ENCODE measurements at regions of chr4 and their contacts with region 1.

Region 1: DNA sequence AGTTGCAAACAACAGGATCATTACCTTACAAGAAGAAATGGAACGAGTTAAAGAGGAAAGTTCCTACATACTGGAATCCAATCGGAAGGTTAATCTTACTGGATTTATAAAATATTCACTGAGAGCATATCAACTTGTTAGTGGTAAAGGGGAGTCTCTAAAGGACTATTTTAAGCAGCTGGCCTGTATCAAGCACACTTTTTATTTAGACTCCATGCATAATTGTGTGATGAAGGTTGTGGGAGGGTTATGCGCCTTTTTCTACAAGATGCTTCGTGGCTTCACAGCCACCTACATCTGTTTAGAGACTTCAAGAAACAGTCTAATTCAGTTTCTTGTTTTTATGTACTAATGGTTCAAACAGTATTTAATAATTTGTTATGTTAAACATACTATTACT is 56.6 kb downstream of the GRSF1 start:
- DNase-seq: no peak
- ATAC-seq: no peak
- H3K4me3 ChIP-seq: no peak overlapping the region
- H3K27ac ChIP-seq: no peak overlapping the region
- H3K4me1 ChIP-seq: no peaks in the 10 kb centered on the region
- H3K27me3 ChIP-seq: no peaks in the 10 kb centered on the region

Region 2: GRCh38 chr4:69920874-69921273 is 862.2 kb before region 1 on chr4:
- intact Hi-C with region 1: no loop called
- DNase-seq: no peak
- ATAC-seq: no peak
- H3K4me3 ChIP-seq: no peak overlapping the region
- H3K27ac ChIP-seq: no peak overlapping the region
- H3K4me1 ChIP-seq: no peaks in the 10 kb centered on the region
- H3K27me3 ChIP-seq: peaks cover 0 to 4% of the 10 kb centered on the region in 2 donors

Region 3: DNA sequence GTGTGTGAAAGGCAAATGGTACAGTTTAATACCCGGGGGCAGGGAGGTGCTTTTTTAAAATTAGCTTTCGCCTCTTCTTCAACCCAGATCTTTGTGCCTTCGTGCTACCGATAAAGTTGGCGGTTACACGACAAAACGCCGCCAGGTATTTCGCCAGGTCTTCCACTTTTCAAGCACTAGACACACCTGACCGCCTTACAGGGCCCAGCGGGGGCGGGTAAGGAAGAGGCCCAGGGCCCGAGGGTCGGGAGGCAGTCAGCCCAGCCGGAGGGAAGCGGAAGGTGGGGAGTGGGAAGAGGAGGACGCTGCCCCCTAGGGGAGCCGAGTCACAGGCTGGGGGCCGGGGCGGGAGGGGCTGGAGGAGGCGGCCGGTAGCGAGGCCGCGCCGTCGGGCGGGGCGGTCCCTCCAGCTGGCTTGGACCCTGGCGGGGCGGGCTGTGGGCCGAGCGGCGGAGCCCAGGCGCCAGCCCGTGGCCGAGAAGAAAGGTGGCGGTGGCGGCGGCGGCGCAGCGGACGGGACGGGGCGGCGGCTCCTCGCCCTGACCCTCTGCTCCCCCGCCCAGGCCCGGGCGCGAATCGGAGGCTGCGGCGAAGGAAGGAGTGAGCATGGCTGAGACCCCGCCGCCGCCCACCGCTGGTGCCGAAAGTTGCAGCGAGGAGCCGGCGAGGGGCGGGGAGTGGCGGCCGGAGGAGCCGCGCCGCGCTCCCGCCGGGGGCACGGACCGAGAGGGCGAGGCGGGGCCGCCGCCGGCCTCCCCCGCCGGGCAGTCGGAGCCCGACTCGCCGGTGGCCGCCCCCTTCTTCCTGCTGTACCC is 78.6 kb before region 1 on chr4:
- intact Hi-C with region 1: loop called in 1 of 2 experiments (anchors 10 kb)
- DNase-seq: peak; percentile 86 to 93
- ATAC-seq: peak; percentile 92
- H3K4me3 ChIP-seq: peak overlapping the region; percentile 91 to 92
- H3K27ac ChIP-seq: peak overlapping the region; percentile 80 to 84
- H3K4me1 ChIP-seq: peaks cover 5 to 7% of the 10 kb centered on the region in 2 donors
- H3K27me3 ChIP-seq: no peaks in the 10 kb centered on the region

Region 4: DNA sequence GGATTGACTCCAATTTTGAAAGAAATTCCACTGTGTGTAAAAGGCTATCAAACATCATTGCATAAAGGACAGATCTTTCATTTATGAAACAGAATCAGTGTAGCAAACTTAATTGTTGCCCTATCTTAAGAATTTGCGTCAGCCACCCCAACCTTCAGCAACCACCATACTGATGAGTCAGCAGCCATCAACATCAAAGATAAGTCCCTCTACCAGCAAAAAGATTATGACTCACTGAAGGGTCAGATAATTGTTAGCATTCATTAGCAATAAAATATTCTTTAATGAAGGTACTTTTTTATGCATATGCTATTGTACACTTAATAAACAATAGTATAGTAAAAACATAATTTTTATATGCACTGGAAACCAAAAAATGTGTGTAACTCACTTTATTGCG is 72.4 kb after region 1 on chr4:
- intact Hi-C with region 1: no loop called
- DNase-seq: no peak
- ATAC-seq: no peak
- H3K4me3 ChIP-seq: no peak overlapping the region
- H3K27ac ChIP-seq: no peak overlapping the region
- H3K4me1 ChIP-seq: no peaks in the 10 kb centered on the region
- H3K27me3 ChIP-seq: no peaks in the 10 kb centered on the region